GM12878 (cell line): ENCODE measurements at regions of chr14 and their contacts with region 1.

Region 1: DNA sequence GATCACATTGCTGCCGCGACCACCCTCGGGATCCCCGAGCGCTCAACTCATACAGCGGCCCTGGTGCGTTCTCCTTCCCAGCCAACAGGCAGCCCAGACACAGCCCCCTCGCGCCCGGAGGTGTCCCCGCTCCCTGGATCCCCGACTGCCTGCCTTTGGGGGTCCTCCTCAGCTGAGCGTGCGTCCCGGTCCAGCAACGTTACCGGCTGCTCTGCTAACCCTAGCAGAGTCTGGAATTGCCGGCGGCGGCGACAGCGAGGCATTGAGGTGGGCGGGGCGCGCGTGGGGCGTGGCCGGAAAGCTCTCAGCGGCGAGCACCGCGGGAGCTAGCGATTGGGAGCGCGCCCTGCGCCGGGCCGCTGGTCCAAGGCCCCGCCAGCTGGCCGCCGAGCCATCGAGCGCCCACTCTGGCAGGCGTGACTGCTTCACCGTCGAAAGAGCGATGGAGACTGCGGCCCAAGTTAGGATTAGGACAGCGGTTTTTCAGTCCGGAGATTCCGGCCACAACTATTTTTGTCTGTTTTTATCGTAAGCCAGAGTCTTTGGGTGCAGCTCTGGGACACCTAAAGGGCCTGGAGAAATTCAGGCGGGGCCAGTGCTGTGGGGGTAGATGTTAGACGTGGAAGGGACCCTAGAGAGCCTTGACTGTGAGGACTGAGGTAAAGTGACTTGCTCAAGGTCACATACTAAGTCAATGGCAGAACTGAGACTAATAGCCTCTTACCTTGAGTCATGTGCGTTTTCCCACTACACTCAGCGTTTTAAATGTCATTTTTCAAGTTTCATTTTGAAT is at the start of gene HEATR5A:
- DNase-seq: peak; percentile 69
- ATAC-seq: peak; percentile 97
- H3K4me3 ChIP-seq: peak within 1 kb of the TSS; percentile 91
- H3K27ac ChIP-seq: peak within 1 kb of the TSS; percentile 67
- H3K4me1 ChIP-seq: no peaks in the 10 kb centered on the region
- H3K27me3 ChIP-seq: no peaks in the 10 kb centered on the region
- CTCF ChIP-seq: peak in 2 of 3 experiments; percentile 20 to 27; a peak in 3 of 6 replicates
- EP300 ChIP-seq: no peak; a peak in 1 of 4 replicates
- POLR2A ChIP-seq: peak; percentile 100
- RAD21 ChIP-seq: no peak
- polyA plus RNA-seq, gene HEATR5A: 25.4 to 37.1 TPM

Region 2: GRCh38 chr14:31286456-31287293 is 133.8 kb before region 1 on chr14:
- CTCF ChIA-PET with region 1: no interaction called
- POLR2A ChIA-PET with region 1: interaction called, 11 read pairs
- RAD21 ChIA-PET with region 1: no interaction called
- SMC1A ChIA-PET with region 1: no interaction called
- in situ Hi-C with region 1: no loop called
- intact Hi-C with region 1: no loop called
- DNase-seq: no peak
- ATAC-seq: peak; percentile 47; the same call in 2 of the 3 replicates
- H3K4me3 ChIP-seq: no peak overlapping the region
- H3K27ac ChIP-seq: no peak overlapping the region
- H3K4me1 ChIP-seq: peaks cover 9% of the 10 kb centered on the region
- H3K27me3 ChIP-seq: no peaks in the 10 kb centered on the region
- CTCF ChIP-seq: peak; percentile 3 to 56 (median 37); a peak in 2 of 6 replicates
- EP300 ChIP-seq: no peak
- POLR2A ChIP-seq: no peak
- RAD21 ChIP-seq: 0 out of 2 replicates have a peak, but pooled peaks have one; percentile 7

Region 3: DNA sequence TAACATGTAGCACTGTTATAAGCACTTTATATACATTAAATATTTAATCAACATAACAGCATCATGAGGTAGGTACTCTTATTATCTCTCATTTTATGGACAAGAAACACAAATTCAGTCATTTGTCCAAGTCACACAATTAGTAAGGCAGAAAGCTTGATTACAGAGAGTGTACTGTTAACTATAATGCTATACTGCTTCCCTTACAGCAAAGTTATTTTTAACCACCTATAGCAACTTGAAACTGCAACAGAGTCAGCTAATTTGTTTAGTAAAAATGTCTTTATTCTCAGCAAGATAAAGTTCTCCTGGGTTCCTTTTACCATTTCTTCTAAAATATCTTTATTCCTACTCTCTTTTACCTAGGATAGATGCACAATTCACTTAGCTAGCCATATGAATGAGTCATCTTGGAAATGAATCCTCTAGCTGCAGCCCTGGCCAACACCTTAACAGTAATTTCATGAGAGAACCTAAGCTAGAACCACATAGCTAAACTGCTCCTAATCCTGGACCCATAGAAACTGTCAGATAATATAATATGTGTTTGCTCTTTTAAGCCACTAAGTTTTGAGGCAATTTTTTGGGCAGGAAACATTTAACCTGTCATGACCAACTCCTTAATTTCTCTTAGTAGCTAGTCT is 122.7 kb before region 1 on chr14:
- CTCF ChIA-PET with region 1: no interaction called
- POLR2A ChIA-PET with region 1: no interaction called
- RAD21 ChIA-PET with region 1: no interaction called
- SMC1A ChIA-PET with region 1: no interaction called
- in situ Hi-C with region 1: no loop called
- intact Hi-C with region 1: no loop called
- DNase-seq: no peak
- ATAC-seq: peak; percentile 67
- H3K4me3 ChIP-seq: no peak overlapping the region
- H3K27ac ChIP-seq: peak overlapping the region; percentile 25; the same call in 1 of the 2 replicates
- H3K4me1 ChIP-seq: peaks cover 14% of the 10 kb centered on the region
- H3K27me3 ChIP-seq: no peaks in the 10 kb centered on the region
- CTCF ChIP-seq: no peak
- EP300 ChIP-seq: no peak
- POLR2A ChIP-seq: no peak
- RAD21 ChIP-seq: no peak

Region 4: GRCh38 chr14:31402764-31403439 is 17.6 kb before region 1 on chr14:
- CTCF ChIA-PET with region 1: interaction called, 4 read pairs
- POLR2A ChIA-PET with region 1: interaction called, 5 read pairs
- RAD21 ChIA-PET with region 1: no interaction called
- SMC1A ChIA-PET with region 1: interaction called, 11 read pairs
- in situ Hi-C with region 1: no loop called
- intact Hi-C with region 1: no loop called
- DNase-seq: no peak
- ATAC-seq: no peak
- H3K4me3 ChIP-seq: no peak overlapping the region
- H3K27ac ChIP-seq: no peak overlapping the region
- H3K4me1 ChIP-seq: peaks cover 3% of the 10 kb centered on the region
- H3K27me3 ChIP-seq: no peaks in the 10 kb centered on the region
- CTCF ChIP-seq: no peak
- EP300 ChIP-seq: no peak
- POLR2A ChIP-seq: no peak
- RAD21 ChIP-seq: no peak

Region 5: DNA sequence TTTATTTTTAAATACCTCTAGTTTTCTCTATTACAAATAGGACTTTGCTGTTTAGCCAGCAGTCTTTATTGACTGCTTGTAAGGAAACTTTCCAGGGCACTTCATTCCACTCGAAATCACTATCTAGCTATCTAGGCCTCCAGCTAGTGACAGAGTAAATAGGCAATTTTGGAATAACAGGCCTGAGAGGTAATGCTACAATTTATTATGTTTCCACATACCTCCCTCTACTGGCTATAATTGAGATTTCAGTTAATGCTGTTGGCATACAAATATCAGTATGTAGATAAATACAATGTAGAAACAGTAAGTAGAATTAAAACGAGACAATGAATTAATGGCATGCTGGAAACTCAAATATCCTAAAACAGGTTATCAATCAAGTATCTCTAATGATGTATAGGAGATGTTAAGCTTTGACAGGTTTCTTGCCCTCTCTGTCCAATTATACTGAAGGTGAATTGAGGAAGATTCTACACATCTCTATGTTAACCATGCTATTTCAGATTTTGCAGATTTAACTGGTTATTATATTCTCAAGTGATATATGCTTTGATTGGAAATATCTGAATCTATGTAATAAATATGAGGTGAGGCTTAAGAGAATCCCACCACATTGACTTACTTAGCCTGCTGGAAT is 29.6 kb after region 1 on chr14:
- CTCF ChIA-PET with region 1: interaction called, 15 read pairs
- POLR2A ChIA-PET with region 1: interaction called, 3 read pairs
- RAD21 ChIA-PET with region 1: interaction called, 6 read pairs
- SMC1A ChIA-PET with region 1: interaction called, 4 read pairs
- in situ Hi-C with region 1: no loop called
- intact Hi-C with region 1: loop called (anchors 5 kb)
- DNase-seq: no peak
- ATAC-seq: peak; percentile 84
- H3K4me3 ChIP-seq: no peak overlapping the region
- H3K27ac ChIP-seq: no peak overlapping the region
- H3K4me1 ChIP-seq: no peaks in the 10 kb centered on the region
- H3K27me3 ChIP-seq: no peaks in the 10 kb centered on the region
- CTCF ChIP-seq: peak; percentile 48 to 53 (median 50); a peak in 4 of 6 replicates
- EP300 ChIP-seq: no peak
- POLR2A ChIP-seq: no peak
- RAD21 ChIP-seq: peak; percentile 53

Region 6: GRCh38 chr14:31456841-31457664 is 36.5 kb after region 1 on chr14 and contains the start of gene DTD2:
- CTCF ChIA-PET with region 1: interaction called, 4 read pairs
- POLR2A ChIA-PET with region 1: interaction called, 6 read pairs
- RAD21 ChIA-PET with region 1: interaction called, 8 read pairs
- SMC1A ChIA-PET with region 1: interaction called, 8 read pairs
- in situ Hi-C with region 1: no loop called
- intact Hi-C with region 1: loop called (anchors 5 kb)
- DNase-seq: peak; percentile 74
- ATAC-seq: peak; percentile 99
- H3K4me3 ChIP-seq: peak within 1 kb of the TSS; percentile 82
- H3K27ac ChIP-seq: peak within 1 kb of the TSS; percentile 76
- H3K4me1 ChIP-seq: no peaks in the 10 kb centered on the region; the same call in 1 of the 2 replicates
- H3K27me3 ChIP-seq: no peaks in the 10 kb centered on the region
- CTCF ChIP-seq: peak in 1 of 3 experiments; percentile 5; a peak in 1 of 6 replicates
- EP300 ChIP-seq: no peak
- POLR2A ChIP-seq: peak; percentile 95
- RAD21 ChIP-seq: no peak
- polyA plus RNA-seq, gene DTD2: 4.5 to 5.4 TPM

Region 7: GRCh38 chr14:31492759-31493498 is 72.4 kb after region 1 on chr14:
- CTCF ChIA-PET with region 1: no interaction called
- POLR2A ChIA-PET with region 1: no interaction called
- RAD21 ChIA-PET with region 1: no interaction called
- SMC1A ChIA-PET with region 1: no interaction called
- in situ Hi-C with region 1: no loop called
- intact Hi-C with region 1: no loop called
- DNase-seq: no peak
- ATAC-seq: peak; percentile 40
- H3K4me3 ChIP-seq: no peak overlapping the region
- H3K27ac ChIP-seq: no peak overlapping the region
- H3K4me1 ChIP-seq: peaks cover 13% of the 10 kb centered on the region
- H3K27me3 ChIP-seq: no peaks in the 10 kb centered on the region
- CTCF ChIP-seq: no peak
- EP300 ChIP-seq: no peak
- POLR2A ChIP-seq: no peak
- RAD21 ChIP-seq: no peak